CD8-positive, alpha-beta T cell (primary cell): ENCODE measurements at regions of chr12 and their contacts with region 1.

Region 1: DNA sequence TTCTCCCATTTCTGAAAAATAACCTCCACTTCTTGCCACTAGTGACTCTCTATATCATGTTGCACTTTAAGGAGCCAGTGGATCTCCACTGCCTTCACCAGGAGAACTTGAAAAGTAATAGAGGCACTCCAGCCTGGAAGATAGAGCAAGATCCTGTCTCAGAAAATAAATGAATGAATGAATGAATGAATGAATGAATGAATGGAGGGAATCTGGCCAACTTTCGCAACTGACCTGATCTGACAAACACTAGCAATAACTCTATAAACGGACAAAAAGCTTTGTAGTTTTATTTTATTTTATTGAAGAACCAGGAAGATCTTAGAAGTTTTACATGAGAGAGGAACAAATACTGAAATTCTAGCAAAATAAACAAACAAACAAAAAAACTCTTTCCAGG is 109.7 kb upstream of the AVPR1A start:
- DNase-seq: no peak
- ATAC-seq: no peak
- H3K4me3 ChIP-seq: no peak overlapping the region
- H3K4me3 Mint-ChIP-seq: no peak overlapping the region
- H3K27ac ChIP-seq: no peak overlapping the region
- H3K27ac Mint-ChIP-seq: no peak overlapping the region
- H3K4me1 ChIP-seq: no peaks in the 10 kb centered on the region
- H3K4me1 Mint-ChIP-seq: no peaks in the 10 kb centered on the region
- H3K27me3 ChIP-seq: no peaks in the 10 kb centered on the region
- H3K27me3 Mint-ChIP-seq: no peaks in the 10 kb centered on the region
- CTCF ChIP-seq: no peak

Region 2: GRCh38 chr12:62472472-62472871 is 788.2 kb before region 1 on chr12:
- CTCF ChIA-PET with region 1: no interaction called
- POLR2A ChIA-PET with region 1: no interaction called
- intact Hi-C with region 1: no loop called
- DNase-seq: peak in 1 of 9 experiments; percentile 10
- ATAC-seq: no peak
- H3K4me3 ChIP-seq: no peak overlapping the region
- H3K4me3 Mint-ChIP-seq: no peak overlapping the region
- H3K27ac ChIP-seq: no peak overlapping the region
- H3K27ac Mint-ChIP-seq: no peak overlapping the region
- H3K4me1 ChIP-seq: peaks cover 21% of the 10 kb centered on the region
- H3K4me1 Mint-ChIP-seq: peaks cover 41% of the 10 kb centered on the region
- H3K27me3 ChIP-seq: no peaks in the 10 kb centered on the region
- H3K27me3 Mint-ChIP-seq: no peaks in the 10 kb centered on the region
- CTCF ChIP-seq: no peak

Region 3: GRCh38 chr12:63276537-63277365 is 16.0 kb after region 1 on chr12:
- CTCF ChIA-PET with region 1: no interaction called
- POLR2A ChIA-PET with region 1: no interaction called
- intact Hi-C with region 1: loop called in 1 of 2 experiments (anchors 1 kb)
- DNase-seq: no peak
- ATAC-seq: no peak
- H3K4me3 ChIP-seq: no peak overlapping the region
- H3K4me3 Mint-ChIP-seq: no peak overlapping the region
- H3K27ac ChIP-seq: no peak overlapping the region
- H3K27ac Mint-ChIP-seq: no peak overlapping the region
- H3K4me1 ChIP-seq: no peaks in the 10 kb centered on the region
- H3K4me1 Mint-ChIP-seq: no peaks in the 10 kb centered on the region
- H3K27me3 ChIP-seq: no peaks in the 10 kb centered on the region
- H3K27me3 Mint-ChIP-seq: no peaks in the 10 kb centered on the region
- CTCF ChIP-seq: no peak